ENCODE measurements at regions of chr6 and their contacts with region 1.

Region 1: GRCh38 chr6:142946181-142946923 is 1.4 kb upstream of the HIVEP2 start:
- DNase-seq: peak; percentile 87
- ATAC-seq: peak; percentile 69
- H3K4me3 ChIP-seq: peak overlapping the region; percentile 66 to 99 (median 78)
- H3K27ac ChIP-seq: peak overlapping the region; percentile 97
- H3K4me1 ChIP-seq: peaks cover 35% of the 10 kb centered on the region
- H3K27me3 ChIP-seq: peaks cover 0 to 10% of the 10 kb centered on the region in 2 experiments; a peak in 3 of 5 replicates
- CTCF ChIP-seq: peak; percentile 17
- EP300 ChIP-seq: 0 out of 4 replicates have a peak, but pooled peaks of 1 of the 2 experiments have one; percentile 8
- POLR2A ChIP-seq: peak; percentile 63 to 72
- RAD21 ChIP-seq: 0 out of 2 replicates have a peak, but pooled peaks have one; percentile 1

Region 2: DNA sequence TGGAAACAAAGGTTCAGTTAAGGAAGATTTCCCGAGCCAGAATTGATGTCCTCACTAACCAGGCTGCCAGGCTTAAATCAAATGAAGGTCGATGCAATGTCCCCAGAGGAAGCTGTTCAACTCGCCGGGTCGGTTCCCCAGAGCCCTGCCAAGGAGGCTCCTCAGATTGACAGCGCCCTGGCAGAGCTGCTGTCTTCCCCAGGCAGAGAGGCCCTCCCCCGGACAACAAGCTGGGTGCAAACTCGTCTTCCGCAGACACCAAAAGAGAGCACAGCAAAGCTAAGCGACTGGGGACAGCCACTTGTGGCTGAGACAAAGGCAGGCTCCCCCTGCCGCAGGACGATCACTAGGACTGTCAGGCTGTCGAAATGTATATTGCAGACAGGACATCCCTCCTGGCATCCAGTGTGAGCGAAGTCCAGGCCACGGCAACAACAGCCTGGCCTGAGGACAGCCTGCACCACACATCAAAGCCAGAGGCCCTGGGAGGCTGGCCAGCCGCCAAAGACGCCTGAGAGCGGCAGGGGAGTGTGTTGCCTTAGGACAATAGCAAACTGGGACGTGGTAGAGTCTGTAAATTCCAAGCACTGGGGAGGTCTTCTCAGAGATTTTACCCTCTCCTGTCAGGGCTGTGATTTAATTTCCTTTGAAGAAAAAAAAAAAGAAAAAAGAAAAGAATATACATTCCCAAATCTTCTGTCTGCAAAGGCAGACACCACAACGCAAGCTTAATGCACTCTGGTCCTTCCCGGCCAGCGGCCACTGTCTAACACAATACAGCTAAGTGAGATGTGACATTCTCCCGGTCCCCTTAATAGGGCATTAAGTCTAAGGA is 100.5 kb before region 1 on chr6:
- CTCF ChIA-PET with region 1: no interaction called
- POLR2A ChIA-PET with region 1: interaction called, 3 read pairs
- in situ Hi-C with region 1: loop called (anchors 5 kb)
- intact Hi-C with region 1: loop called (anchors 1 kb)
- DNase-seq: peak; percentile 99
- ATAC-seq: peak; percentile 100
- H3K4me3 ChIP-seq: peak overlapping the region; percentile 50 to 72 (median 71)
- H3K27ac ChIP-seq: peak overlapping the region; percentile 91
- H3K4me1 ChIP-seq: peaks cover 54% of the 10 kb centered on the region
- H3K27me3 ChIP-seq: no peaks in the 10 kb centered on the region
- CTCF ChIP-seq: peak; percentile 79
- EP300 ChIP-seq: peak; percentile 71 to 88; a peak in 3 of 4 replicates
- POLR2A ChIP-seq: peak; percentile 65 to 95
- RAD21 ChIP-seq: peak; percentile 90

Region 3: GRCh38 chr6:142885182-142885867 is 61.0 kb before region 1 on chr6:
- CTCF ChIA-PET with region 1: no interaction called
- POLR2A ChIA-PET with region 1: interaction called, 5 read pairs
- in situ Hi-C with region 1: no loop called
- intact Hi-C with region 1: loop called (anchors 5 kb)
- DNase-seq: peak; percentile 84
- ATAC-seq: peak; percentile 60
- H3K4me3 ChIP-seq: no peak overlapping the region
- H3K27ac ChIP-seq: no peak overlapping the region
- H3K4me1 ChIP-seq: peaks cover 27% of the 10 kb centered on the region
- H3K27me3 ChIP-seq: no peaks in the 10 kb centered on the region
- CTCF ChIP-seq: no peak
- EP300 ChIP-seq: no peak
- POLR2A ChIP-seq: no peak
- RAD21 ChIP-seq: no peak

Region 4: DNA sequence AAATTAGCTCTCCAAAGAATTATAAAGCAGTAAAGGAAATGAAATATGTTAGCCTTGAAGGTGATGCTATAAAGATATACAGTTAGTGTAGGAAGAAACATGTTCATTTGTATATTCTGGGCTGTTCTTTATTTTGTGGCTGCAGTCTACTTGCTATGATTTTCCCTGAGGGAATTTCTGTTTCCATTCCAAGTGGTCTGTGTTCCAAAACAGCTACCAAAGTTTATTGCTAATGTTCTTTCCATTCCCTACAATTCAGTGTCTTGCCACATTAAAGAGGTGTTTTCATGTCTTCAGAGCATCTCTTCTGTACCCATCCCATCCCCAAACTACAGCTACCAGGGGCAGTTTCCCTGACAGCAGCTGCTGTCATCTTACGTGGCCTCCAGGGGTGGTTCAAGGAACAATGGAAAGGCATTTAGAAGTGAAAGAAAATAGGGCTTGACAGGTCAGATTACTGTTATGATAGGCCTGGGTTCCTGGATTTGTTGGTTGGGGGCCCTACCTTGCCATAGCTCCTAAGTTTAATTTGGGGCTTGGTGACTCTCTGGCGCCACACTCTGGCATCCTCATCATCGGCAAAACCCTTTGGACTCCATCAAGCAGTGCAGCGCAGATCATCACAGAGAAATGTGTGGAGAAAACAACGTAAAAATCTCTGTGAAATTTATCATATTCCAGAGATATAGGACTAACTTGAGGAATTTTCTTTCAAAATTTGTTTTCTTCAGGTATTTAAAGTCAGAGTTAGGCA is 80.5 kb after region 1 on chr6:
- CTCF ChIA-PET with region 1: no interaction called
- POLR2A ChIA-PET with region 1: no interaction called
- in situ Hi-C with region 1: no loop called
- intact Hi-C with region 1: loop called (anchors 5 kb)
- DNase-seq: peak; percentile 38
- ATAC-seq: peak; percentile 87
- H3K4me3 ChIP-seq: no peak overlapping the region
- H3K27ac ChIP-seq: no peak overlapping the region
- H3K4me1 ChIP-seq: peaks cover 6% of the 10 kb centered on the region; the same call in 1 of the 2 replicates
- H3K27me3 ChIP-seq: no peaks in the 10 kb centered on the region
- CTCF ChIP-seq: peak; percentile 83
- EP300 ChIP-seq: no peak
- POLR2A ChIP-seq: no peak
- RAD21 ChIP-seq: peak; percentile 85

Region 5: GRCh38 chr6:143397229-143398222 is 451.2 kb after region 1 on chr6:
- CTCF ChIA-PET with region 1: no interaction called
- POLR2A ChIA-PET with region 1: interaction called, 3 read pairs
- in situ Hi-C with region 1: no loop called
- intact Hi-C with region 1: loop called (anchors 10 kb)
- DNase-seq: peak; percentile 99
- ATAC-seq: peak; percentile 90
- H3K4me3 ChIP-seq: peak overlapping the region; percentile 31 to 68 (median 48)
- H3K27ac ChIP-seq: peak overlapping the region; percentile 90
- H3K4me1 ChIP-seq: peaks cover 58% of the 10 kb centered on the region
- H3K27me3 ChIP-seq: no peaks in the 10 kb centered on the region; a peak in 1 of 5 replicates
- CTCF ChIP-seq: no peak
- EP300 ChIP-seq: peak; percentile 95 to 99
- POLR2A ChIP-seq: peak in 1 of 2 experiments; percentile 75; a peak in 2 of 4 replicates
- RAD21 ChIP-seq: no peak; the same call in 1 of the 2 replicates

Measured in HepG2 (cell line).